Activated naive CD8-positive, alpha-beta T cell treated with anti-CD3 and anti-CD28 coated beads, Interleukin-2, amount 10 ng/mL, durations not matched to agents 7 days and 5 days (primary cell): ENCODE measurements at regions of chr2 and their contacts with region 1.

Region 1: GRCh38 chr2:8536678-8537561 is 144.9 kb upstream of the ID2 start:
- DNase-seq: no peak
- ATAC-seq: no peak
- H3K4me3 Mint-ChIP-seq: no peak overlapping the region
- H3K27ac Mint-ChIP-seq: peak overlapping the region; percentile 68
- H3K4me1 Mint-ChIP-seq: peaks cover 50% of the 10 kb centered on the region
- H3K27me3 Mint-ChIP-seq: no peaks in the 10 kb centered on the region

Region 2: GRCh38 chr2:8520791-8521344 is 16.1 kb before region 1 on chr2:
- POLR2A ChIA-PET with region 1: interaction called, 10 read pairs
- DNase-seq: no peak
- ATAC-seq: peak; percentile 32
- H3K4me3 Mint-ChIP-seq: no peak overlapping the region
- H3K27ac Mint-ChIP-seq: peak overlapping the region; percentile 19
- H3K4me1 Mint-ChIP-seq: peaks cover 71% of the 10 kb centered on the region
- H3K27me3 Mint-ChIP-seq: no peaks in the 10 kb centered on the region